Activated CD4-positive, alpha-beta T cell treated with anti-CD3 and anti-CD28 coated beads for 36 hours (primary cell): ENCODE measurements at regions of chr3 and their contacts with region 1.

Region 1: GRCh38 chr3:30664884-30665283 is 58.5 kb downstream of the TGFBR2 start:
- DNase-seq: peak; percentile 34
- ATAC-seq: peak; percentile 31
- H3K4me3 Mint-ChIP-seq: peak overlapping the region; percentile 48
- H3K27ac Mint-ChIP-seq: peak overlapping the region; percentile 90
- H3K4me1 Mint-ChIP-seq: peaks cover 95% of the 10 kb centered on the region
- H3K27me3 Mint-ChIP-seq: no peaks in the 10 kb centered on the region

Region 2: GRCh38 chr3:30634761-30635735 is 29.8 kb before region 1 on chr3:
- CTCF ChIA-PET with region 1: interaction called, 12 read pairs
- POLR2A ChIA-PET with region 1: interaction called, 5 read pairs
- intact Hi-C with region 1: no loop called
- DNase-seq: no peak
- ATAC-seq: peak; percentile 6
- H3K4me3 Mint-ChIP-seq: peak overlapping the region; percentile 61
- H3K27ac Mint-ChIP-seq: peak overlapping the region; percentile 97
- H3K4me1 Mint-ChIP-seq: peaks cover 98% of the 10 kb centered on the region
- H3K27me3 Mint-ChIP-seq: no peaks in the 10 kb centered on the region

Region 3: DNA sequence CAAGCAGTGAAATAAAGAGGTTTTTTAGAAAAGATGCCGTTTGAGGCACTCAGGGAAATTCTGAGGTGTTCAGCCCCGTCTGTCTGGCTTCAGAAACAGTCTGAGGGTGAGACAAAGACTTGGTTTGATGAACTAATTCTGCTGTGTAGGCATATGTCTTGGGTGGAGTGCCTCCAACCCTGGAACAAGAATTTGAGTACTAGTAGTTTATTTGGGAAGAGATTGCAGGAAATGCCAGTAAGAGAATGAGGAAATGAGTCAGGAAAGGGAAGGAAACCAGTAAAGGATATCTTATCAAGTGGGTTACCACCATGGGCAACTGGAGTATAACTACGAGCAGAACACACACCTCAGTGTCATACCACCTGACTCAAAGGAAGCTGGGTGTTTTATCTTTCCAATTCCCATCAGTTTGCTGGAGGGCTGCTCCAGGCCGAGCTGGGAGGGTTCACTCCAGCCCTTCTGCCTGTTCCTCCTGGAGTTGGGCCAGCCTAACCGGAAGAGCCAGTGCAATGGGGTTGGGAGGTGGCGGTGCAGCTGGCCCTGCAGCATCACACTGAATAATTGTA is 16.8 kb after region 1 on chr3:
- CTCF ChIA-PET with region 1: interaction called, 11 read pairs
- POLR2A ChIA-PET with region 1: interaction called, 4 read pairs
- intact Hi-C with region 1: loop called in 1 of 2 experiments (anchors 1 kb)
- DNase-seq: peak; percentile 40
- ATAC-seq: peak; percentile 21
- H3K4me3 Mint-ChIP-seq: peak overlapping the region; percentile 6
- H3K27ac Mint-ChIP-seq: peak overlapping the region; percentile 83
- H3K4me1 Mint-ChIP-seq: peaks cover 95% of the 10 kb centered on the region
- H3K27me3 Mint-ChIP-seq: no peaks in the 10 kb centered on the region